HCT116 (cell line): ENCODE measurements at regions of chr17 and their contacts with region 1.

Region 1: GRCh38 chr17:62109378-62109902 is 44.4 kb upstream of the MED13 start:
- DNase-seq: peak; percentile 95
- ATAC-seq: peak; percentile 99
- H3K4me3 ChIP-seq: no peak overlapping the region
- H3K27ac ChIP-seq: no peak overlapping the region
- H3K4me1 ChIP-seq: peaks cover 0 to 16% of the 10 kb centered on the region in 2 experiments; a peak in 2 of 4 replicates
- H3K27me3 ChIP-seq: no peaks in the 10 kb centered on the region
- CTCF ChIP-seq: peak; percentile 99 to 100 (median 99)
- POLR2A ChIP-seq: no peak
- RAD21 ChIP-seq: peak; percentile 100

Region 2: GRCh38 chr17:61568219-61569072 is 541.0 kb before region 1 on chr17:
- CTCF ChIA-PET with region 1: interaction called, 3 read pairs
- POLR2A ChIA-PET with region 1: no interaction called
- RAD21 ChIA-PET with region 1: no interaction called
- intact Hi-C with region 1: loop called (anchors 10 kb)
- DNase-seq: peak; percentile 95
- ATAC-seq: peak; percentile 75
- H3K4me3 ChIP-seq: peak overlapping the region in 1 of 2 experiments; percentile 0; a peak in 2 of 4 replicates
- H3K27ac ChIP-seq: peak overlapping the region; percentile 96
- H3K4me1 ChIP-seq: peaks cover 36 to 48% of the 10 kb centered on the region in 2 experiments
- H3K27me3 ChIP-seq: no peaks in the 10 kb centered on the region
- CTCF ChIP-seq: no peak
- POLR2A ChIP-seq: no peak
- RAD21 ChIP-seq: peak; percentile 51

Region 3: DNA sequence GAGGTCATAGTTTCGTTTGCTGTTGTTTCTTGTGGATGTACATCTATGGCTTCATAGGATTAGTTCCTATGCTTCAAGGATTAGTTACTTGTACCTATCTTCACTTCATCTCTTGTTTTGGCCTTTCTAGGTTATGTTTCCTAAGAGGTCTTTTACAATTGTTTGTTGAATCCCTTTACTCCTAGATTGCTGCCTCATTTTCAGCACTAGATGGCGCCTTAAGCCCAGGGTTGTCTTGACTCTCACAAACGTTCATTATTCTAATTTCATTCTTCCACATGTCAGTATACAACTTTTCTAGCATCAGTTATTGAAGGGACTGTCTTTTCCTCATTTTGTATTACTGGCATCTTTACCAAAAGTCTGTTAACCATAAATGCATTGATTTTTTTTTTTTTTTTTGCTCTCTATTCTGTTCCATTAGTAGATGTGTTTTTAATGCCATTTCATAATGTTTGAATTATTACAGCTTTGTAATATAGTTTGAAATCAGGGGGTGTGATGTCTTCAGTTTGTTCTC is 473.5 kb before region 1 on chr17:
- CTCF ChIA-PET with region 1: interaction called, 40 read pairs
- POLR2A ChIA-PET with region 1: no interaction called
- RAD21 ChIA-PET with region 1: interaction called, 6 to 14 read pairs
- intact Hi-C with region 1: loop called (anchors 1 kb)
- DNase-seq: peak; percentile 65
- ATAC-seq: peak; percentile 80
- H3K4me3 ChIP-seq: no peak overlapping the region
- H3K27ac ChIP-seq: no peak overlapping the region
- H3K4me1 ChIP-seq: no peaks in the 10 kb centered on the region
- H3K27me3 ChIP-seq: no peaks in the 10 kb centered on the region
- CTCF ChIP-seq: peak; percentile 88 to 99 (median 89)
- POLR2A ChIP-seq: no peak
- RAD21 ChIP-seq: peak; percentile 96

Region 4: DNA sequence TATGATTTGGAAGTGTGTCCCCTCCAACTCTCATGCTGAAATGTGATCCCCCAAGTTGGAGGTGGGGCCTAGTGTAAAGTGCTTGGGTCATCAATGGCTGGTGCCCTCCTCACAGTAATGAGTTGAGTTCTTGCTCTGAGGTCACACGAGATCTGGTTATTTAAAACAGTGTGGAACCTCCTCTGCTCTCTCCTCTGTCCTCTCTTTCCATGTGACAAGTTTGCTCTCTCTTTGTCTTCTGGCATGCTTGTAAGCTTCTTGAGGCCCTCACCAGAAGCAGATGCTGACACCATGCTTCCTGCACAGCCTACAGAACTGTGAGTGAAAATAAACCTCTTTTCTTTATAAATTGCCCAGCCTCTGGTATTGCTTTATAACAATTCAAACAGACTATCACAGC is 266.0 kb before region 1 on chr17:
- CTCF ChIA-PET with region 1: interaction called, 18 read pairs
- POLR2A ChIA-PET with region 1: no interaction called
- RAD21 ChIA-PET with region 1: no interaction called
- intact Hi-C with region 1: no loop called
- DNase-seq: no peak
- ATAC-seq: no peak
- H3K4me3 ChIP-seq: no peak overlapping the region
- H3K27ac ChIP-seq: no peak overlapping the region
- H3K4me1 ChIP-seq: no peaks in the 10 kb centered on the region
- H3K27me3 ChIP-seq: no peaks in the 10 kb centered on the region
- CTCF ChIP-seq: no peak
- POLR2A ChIP-seq: no peak
- RAD21 ChIP-seq: no peak

Region 5: DNA sequence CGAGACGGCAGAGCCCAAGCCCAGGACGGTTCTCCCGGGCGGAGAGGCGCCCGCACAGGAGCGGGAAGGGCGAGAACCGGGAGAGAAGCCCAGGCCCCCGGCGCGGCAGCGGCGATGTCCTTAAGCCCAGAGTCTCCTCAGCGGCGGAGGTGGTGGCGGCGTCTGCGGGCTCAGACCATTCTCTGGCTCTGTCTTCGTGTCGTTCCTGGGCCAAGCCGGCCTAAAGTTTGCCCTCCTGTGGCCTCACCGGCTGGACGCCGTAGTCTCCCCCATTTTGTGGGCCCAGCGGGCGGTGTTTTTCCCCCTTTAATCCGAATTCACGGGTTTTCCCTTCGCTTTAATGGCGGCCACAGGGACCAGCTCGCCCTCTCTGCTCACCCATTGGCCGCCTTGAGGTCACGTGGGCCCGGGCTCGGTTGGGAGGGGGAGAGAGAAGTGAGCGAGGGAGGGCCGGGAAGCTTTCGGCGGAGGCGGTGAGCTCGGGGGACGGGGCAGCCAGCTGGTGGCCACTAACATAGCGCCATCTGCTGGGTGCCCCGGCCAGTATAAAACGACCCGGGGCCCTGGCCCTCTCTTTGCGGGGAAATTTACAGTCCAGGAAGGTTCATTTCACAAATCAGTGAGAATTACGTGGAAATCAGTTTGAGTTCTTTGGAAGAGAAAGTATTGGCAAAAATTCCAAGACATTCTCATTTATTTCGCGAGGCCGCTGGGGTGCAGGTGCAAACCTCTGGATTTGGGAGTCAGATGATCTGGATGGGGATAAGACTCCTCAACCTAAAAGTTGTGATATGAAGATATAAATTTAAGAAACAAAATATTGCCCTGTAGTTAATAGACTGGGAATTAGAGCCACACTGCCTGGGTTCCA is 43.6 kb before region 1 on chr17:
- CTCF ChIA-PET with region 1: interaction called, 38 read pairs
- POLR2A ChIA-PET with region 1: interaction called, 6 read pairs
- RAD21 ChIA-PET with region 1: interaction called, 7 to 12 read pairs
- intact Hi-C with region 1: loop called (anchors 2 kb)
- DNase-seq: peak; percentile 96
- ATAC-seq: peak; percentile 94
- H3K4me3 ChIP-seq: peak overlapping the region; percentile 89 to 95
- H3K27ac ChIP-seq: peak overlapping the region; percentile 95
- H3K4me1 ChIP-seq: peaks cover 7 to 20% of the 10 kb centered on the region in 2 experiments
- H3K27me3 ChIP-seq: no peaks in the 10 kb centered on the region
- CTCF ChIP-seq: peak; percentile 84 to 99 (median 98)
- POLR2A ChIP-seq: peak; percentile 69
- RAD21 ChIP-seq: peak; percentile 87

Region 6: DNA sequence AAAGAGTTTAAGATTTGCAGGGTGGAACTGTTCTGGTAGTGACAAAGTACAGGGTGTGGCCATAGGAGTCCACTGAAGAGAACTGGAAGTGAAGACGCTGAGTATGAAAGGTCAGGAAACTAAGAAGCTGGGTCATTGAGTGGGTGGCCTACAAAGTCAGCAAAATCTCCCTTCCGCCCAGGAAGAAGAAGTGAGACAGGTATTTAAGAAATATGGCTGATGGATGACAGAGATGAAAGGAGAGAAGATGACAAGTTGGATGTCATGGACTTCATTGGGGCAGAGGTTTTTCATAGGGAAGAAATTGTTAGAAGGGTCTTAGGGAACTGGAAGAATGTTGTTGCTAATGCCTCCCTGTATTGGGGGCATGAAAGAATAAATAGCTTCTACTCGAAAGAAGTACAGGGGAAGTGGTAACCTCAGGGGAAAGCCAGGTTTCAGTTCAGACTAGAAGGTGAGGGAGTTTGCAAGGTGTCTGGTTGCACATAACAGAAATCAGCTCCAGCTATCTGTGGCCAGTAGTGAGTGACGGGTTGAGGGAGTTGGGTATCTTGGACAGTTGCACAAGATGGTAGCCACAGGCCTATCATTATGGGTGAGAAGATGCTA is 10.7 kb before region 1 on chr17:
- CTCF ChIA-PET with region 1: interaction called, 24 read pairs
- POLR2A ChIA-PET with region 1: no interaction called
- RAD21 ChIA-PET with region 1: interaction called, 3 read pairs
- intact Hi-C with region 1: no loop called
- DNase-seq: no peak
- ATAC-seq: no peak
- H3K4me3 ChIP-seq: no peak overlapping the region
- H3K27ac ChIP-seq: no peak overlapping the region
- H3K4me1 ChIP-seq: peaks cover 5 to 8% of the 10 kb centered on the region in 2 experiments
- H3K27me3 ChIP-seq: no peaks in the 10 kb centered on the region
- CTCF ChIP-seq: no peak
- POLR2A ChIP-seq: no peak
- RAD21 ChIP-seq: no peak